ENCODE measurements at regions of chr7 and their contacts with region 1.

Region 1: GRCh38 chr7:22103255-22103969 is 157.7 kb upstream of the CDCA7L start:
- DNase-seq: peak; percentile 84
- ATAC-seq: peak; percentile 100
- H3K4me3 Mint-ChIP-seq: no peak overlapping the region
- H3K27ac Mint-ChIP-seq: no peak overlapping the region
- H3K4me1 Mint-ChIP-seq: peaks cover 7% of the 10 kb centered on the region
- H3K27me3 Mint-ChIP-seq: peaks cover 13% of the 10 kb centered on the region

Region 2: DNA sequence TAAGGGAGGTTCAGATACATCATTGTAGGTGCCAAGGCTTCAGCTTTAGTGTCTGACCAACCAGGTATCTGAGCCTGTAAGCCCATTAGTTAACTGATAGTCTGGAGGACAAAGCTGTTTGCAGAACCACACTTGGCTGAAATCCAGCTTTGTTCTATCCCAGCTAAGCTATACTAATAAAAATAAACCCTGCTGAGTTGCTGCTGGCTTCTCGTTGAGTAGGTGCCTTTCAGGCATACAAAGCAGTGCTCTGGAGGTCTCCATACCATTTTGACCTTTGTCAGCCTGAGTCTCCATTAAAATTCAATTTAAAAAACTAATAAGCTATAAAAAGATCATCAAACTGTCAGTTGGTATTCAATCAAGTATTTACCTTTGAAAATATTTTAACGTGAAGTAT is 179.8 kb before region 1 on chr7:
- CTCF ChIA-PET with region 1: no interaction called
- POLR2A ChIA-PET with region 1: no interaction called
- intact Hi-C with region 1: no loop called
- DNase-seq: no peak
- ATAC-seq: no peak
- H3K4me3 Mint-ChIP-seq: no peak overlapping the region
- H3K27ac Mint-ChIP-seq: no peak overlapping the region
- H3K4me1 Mint-ChIP-seq: peaks cover under 1% of the 10 kb centered on the region
- H3K27me3 Mint-ChIP-seq: no peaks in the 10 kb centered on the region

Region 3: GRCh38 chr7:22082886-22083703 is 20.3 kb before region 1 on chr7:
- CTCF ChIA-PET with region 1: interaction called, 15 read pairs
- POLR2A ChIA-PET with region 1: no interaction called
- intact Hi-C with region 1: no loop called
- DNase-seq: peak; percentile 91
- ATAC-seq: peak; percentile 99
- H3K4me3 Mint-ChIP-seq: peak overlapping the region; percentile 71
- H3K27ac Mint-ChIP-seq: no peak overlapping the region
- H3K4me1 Mint-ChIP-seq: peaks cover 10% of the 10 kb centered on the region
- H3K27me3 Mint-ChIP-seq: peaks cover 11% of the 10 kb centered on the region

Region 4: GRCh38 chr7:22093001-22093400 is 10.4 kb before region 1 on chr7:
- CTCF ChIA-PET with region 1: interaction called, 10 read pairs
- POLR2A ChIA-PET with region 1: no interaction called
- intact Hi-C with region 1: no loop called
- DNase-seq: no peak
- ATAC-seq: no peak
- H3K4me3 Mint-ChIP-seq: no peak overlapping the region
- H3K27ac Mint-ChIP-seq: no peak overlapping the region
- H3K4me1 Mint-ChIP-seq: no peaks in the 10 kb centered on the region
- H3K27me3 Mint-ChIP-seq: peaks cover 7% of the 10 kb centered on the region

Region 5: GRCh38 chr7:22488643-22489462 is 385.4 kb after region 1 on chr7:
- CTCF ChIA-PET with region 1: interaction called, 6 read pairs
- POLR2A ChIA-PET with region 1: no interaction called
- intact Hi-C with region 1: loop called (anchors 1 kb)
- DNase-seq: peak; percentile 79
- ATAC-seq: peak; percentile 69
- H3K4me3 Mint-ChIP-seq: no peak overlapping the region
- H3K27ac Mint-ChIP-seq: no peak overlapping the region
- H3K4me1 Mint-ChIP-seq: no peaks in the 10 kb centered on the region
- H3K27me3 Mint-ChIP-seq: peaks cover 4% of the 10 kb centered on the region

Region 6: GRCh38 chr7:22499044-22499443 is 395.6 kb after region 1 on chr7:
- CTCF ChIA-PET with region 1: interaction called, 4 read pairs
- POLR2A ChIA-PET with region 1: no interaction called
- intact Hi-C with region 1: loop called in 1 of 2 experiments (anchors 2 kb)
- DNase-seq: no peak
- ATAC-seq: no peak
- H3K4me3 Mint-ChIP-seq: no peak overlapping the region
- H3K27ac Mint-ChIP-seq: no peak overlapping the region
- H3K4me1 Mint-ChIP-seq: peaks cover 4% of the 10 kb centered on the region
- H3K27me3 Mint-ChIP-seq: peaks cover 22% of the 10 kb centered on the region

Measured in activated CD4-positive, alpha-beta T cell treated with anti-CD3 and anti-CD28 coated beads for 36 hours (primary cell).